ENCODE measurements at regions of chr9 and their contacts with region 1.

Region 1: DNA sequence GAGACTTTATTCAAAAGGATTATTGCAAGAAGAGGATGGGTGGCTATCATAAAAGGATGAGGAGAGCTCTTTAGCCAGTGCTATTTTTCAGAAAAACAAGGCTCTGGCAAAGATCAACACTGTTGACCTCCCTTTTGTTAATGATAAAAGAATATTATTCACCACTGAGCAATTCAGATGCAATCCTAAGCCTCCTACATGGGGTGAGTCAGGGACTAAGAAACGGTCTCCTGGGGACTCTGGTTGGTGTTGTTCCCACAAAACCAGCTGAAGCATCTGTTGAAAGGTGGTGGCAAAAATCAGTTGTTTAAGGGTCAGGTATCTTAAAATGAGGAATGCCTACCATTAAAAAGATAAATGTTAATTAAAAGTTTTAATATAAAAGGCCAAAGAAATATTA is 7.7 kb upstream of the GCNT1 start:
- DNase-seq: no peak
- ATAC-seq: no peak

Region 2: GRCh38 chr9:76374702-76375559 is 76.3 kb before region 1 on chr9:
- intact Hi-C with region 1: no loop called
- DNase-seq: peak; percentile 75
- ATAC-seq: peak; percentile 91

Region 3: GRCh38 chr9:76704593-76705204 is 253.5 kb after region 1 on chr9:
- intact Hi-C with region 1: loop called (anchors 5 kb)
- DNase-seq: no peak
- ATAC-seq: peak; percentile 43

Measured in left ventricle myocardium superior (tissue), 1 donor.